ENCODE measurements at regions of chr1 and their contacts with region 1.

Region 1: GRCh38 chr1:93061895-93062792 is 16.9 kb upstream of the MTF2 start:
- DNase-seq: peak; percentile 25 to 65
- H3K4me3 ChIP-seq: no peak overlapping the region; the same call in 1 of the 2 replicates
- H3K27ac ChIP-seq: no peak overlapping the region
- H3K4me1 ChIP-seq: peaks cover 10% of the 10 kb centered on the region
- H3K27me3 ChIP-seq: no peaks in the 10 kb centered on the region
- CTCF ChIP-seq: peak; percentile 93

Region 2: GRCh38 chr1:92858564-92859399 is 203.4 kb before region 1 on chr1:
- CTCF ChIA-PET with region 1: interaction called, 9 read pairs
- POLR2A ChIA-PET with region 1: no interaction called
- intact Hi-C with region 1: loop called (anchors 1 kb)
- DNase-seq: peak; percentile 45 to 82
- H3K4me3 ChIP-seq: no peak overlapping the region
- H3K27ac ChIP-seq: no peak overlapping the region
- H3K4me1 ChIP-seq: no peaks in the 10 kb centered on the region
- H3K27me3 ChIP-seq: no peaks in the 10 kb centered on the region
- CTCF ChIP-seq: peak; percentile 100

Region 3: GRCh38 chr1:92960395-92961130 is 101.6 kb before region 1 on chr1:
- CTCF ChIA-PET with region 1: interaction called, 7 read pairs
- POLR2A ChIA-PET with region 1: no interaction called
- intact Hi-C with region 1: loop called (anchors 2 kb)
- DNase-seq: peak; percentile 61 to 83
- H3K4me3 ChIP-seq: peak overlapping the region; percentile 66
- H3K27ac ChIP-seq: peak overlapping the region; percentile 65
- H3K4me1 ChIP-seq: peaks cover 22% of the 10 kb centered on the region
- H3K27me3 ChIP-seq: no peaks in the 10 kb centered on the region
- CTCF ChIP-seq: peak; percentile 81

Region 4: DNA sequence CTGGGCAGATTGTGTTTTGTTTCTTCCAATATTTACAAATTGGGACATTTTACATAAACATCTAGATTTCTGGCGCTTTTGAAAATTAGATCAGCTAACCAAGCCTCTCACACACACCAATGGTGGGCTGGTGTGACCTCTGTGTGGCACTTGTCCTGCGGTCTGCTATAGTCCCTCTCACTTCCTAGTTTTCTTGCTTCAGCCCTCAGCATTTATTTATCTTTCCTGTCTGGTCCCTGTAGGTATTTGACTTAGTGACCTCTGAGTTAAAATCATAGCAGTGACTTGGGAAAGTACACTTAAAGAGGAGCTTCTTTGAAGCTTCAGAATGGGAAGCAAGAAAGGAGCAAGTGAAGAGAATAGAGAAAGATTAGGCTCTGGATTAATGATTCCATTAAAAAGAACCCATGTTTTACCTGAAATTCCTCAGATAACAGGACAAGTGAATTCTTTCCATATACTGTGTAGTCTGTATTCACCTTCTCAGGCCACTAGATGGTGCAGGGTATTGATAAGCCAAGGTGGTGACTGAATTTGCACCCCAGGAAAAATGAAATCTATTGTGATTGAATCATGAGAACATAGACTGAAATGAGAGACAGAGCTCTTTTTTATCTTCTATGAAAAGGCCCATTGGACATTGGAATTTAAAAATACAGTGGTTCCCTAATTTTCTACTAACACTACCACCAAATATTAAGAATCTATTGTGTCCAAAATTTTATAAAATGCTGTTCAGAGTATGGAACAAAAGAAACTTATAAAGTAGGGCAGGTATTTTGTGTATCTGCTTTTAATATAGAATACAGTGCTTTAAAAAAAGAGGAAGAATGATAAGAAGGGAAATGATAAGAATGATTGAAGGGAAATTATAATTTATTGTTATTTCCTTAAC is 93.8 kb before region 1 on chr1:
- CTCF ChIA-PET with region 1: interaction called, 3 read pairs
- POLR2A ChIA-PET with region 1: no interaction called
- intact Hi-C with region 1: loop called (anchors 1 kb)
- DNase-seq: peak in 1 of 2 experiments; percentile 44
- H3K4me3 ChIP-seq: no peak overlapping the region
- H3K27ac ChIP-seq: peak overlapping the region; percentile 2; the same call in 1 of the 2 replicates
- H3K4me1 ChIP-seq: peaks cover 21% of the 10 kb centered on the region
- H3K27me3 ChIP-seq: no peaks in the 10 kb centered on the region
- CTCF ChIP-seq: peak; percentile 86

Region 5: DNA sequence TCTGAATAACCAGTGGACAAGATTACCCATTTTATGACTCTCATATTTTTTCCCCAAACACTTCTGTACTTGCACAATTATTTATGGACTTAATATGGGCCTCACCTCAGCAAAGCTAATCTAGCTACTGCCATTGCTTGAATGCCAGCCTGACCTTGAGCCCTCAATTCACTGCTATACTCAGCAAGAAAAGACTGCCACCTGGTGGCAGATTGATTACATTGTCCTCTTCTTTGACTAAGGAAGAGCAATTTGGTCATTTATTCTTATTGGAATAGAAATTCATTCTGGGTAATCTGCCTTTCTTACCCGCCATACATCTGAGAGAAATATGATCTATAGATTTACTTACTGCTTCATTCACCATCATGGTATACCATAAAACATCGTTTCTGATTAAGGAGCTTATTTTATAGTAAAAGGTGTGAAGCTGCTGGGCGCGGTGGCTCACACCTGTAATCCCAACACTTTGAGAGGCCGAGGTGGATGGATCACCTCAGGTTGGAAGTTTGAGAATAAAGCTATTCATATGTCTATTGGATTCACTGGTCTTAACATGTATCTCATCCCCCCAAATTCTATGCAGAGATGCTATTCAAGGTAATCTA is 67.9 kb before region 1 on chr1:
- CTCF ChIA-PET with region 1: interaction called, 3 read pairs
- POLR2A ChIA-PET with region 1: interaction called, 4 read pairs
- intact Hi-C with region 1: loop called (anchors 1 kb)
- DNase-seq: peak; percentile 33 to 79
- H3K4me3 ChIP-seq: no peak overlapping the region
- H3K27ac ChIP-seq: no peak overlapping the region
- H3K4me1 ChIP-seq: peaks cover 66% of the 10 kb centered on the region
- H3K27me3 ChIP-seq: no peaks in the 10 kb centered on the region
- CTCF ChIP-seq: peak; percentile 98

Region 6: GRCh38 chr1:93021539-93022134 is 40.5 kb before region 1 on chr1:
- CTCF ChIA-PET with region 1: interaction called, 13 read pairs
- POLR2A ChIA-PET with region 1: no interaction called
- intact Hi-C with region 1: loop called (anchors 1 kb)
- DNase-seq: peak in 1 of 2 experiments; percentile 56
- H3K4me3 ChIP-seq: no peak overlapping the region
- H3K27ac ChIP-seq: no peak overlapping the region
- H3K4me1 ChIP-seq: peaks cover 13% of the 10 kb centered on the region
- H3K27me3 ChIP-seq: no peaks in the 10 kb centered on the region
- CTCF ChIP-seq: peak; percentile 97

Region 7: GRCh38 chr1:93042187-93043056 is 19.7 kb before region 1 on chr1:
- CTCF ChIA-PET with region 1: no interaction called
- POLR2A ChIA-PET with region 1: no interaction called
- intact Hi-C with region 1: no loop called
- DNase-seq: no peak
- H3K4me3 ChIP-seq: no peak overlapping the region
- H3K27ac ChIP-seq: no peak overlapping the region
- H3K4me1 ChIP-seq: no peaks in the 10 kb centered on the region
- H3K27me3 ChIP-seq: no peaks in the 10 kb centered on the region
- CTCF ChIP-seq: no peak

Region 8: GRCh38 chr1:93453911-93454310 is 391.8 kb after region 1 on chr1:
- CTCF ChIA-PET with region 1: interaction called, 15 read pairs
- POLR2A ChIA-PET with region 1: no interaction called
- intact Hi-C with region 1: no loop called
- DNase-seq: no peak
- H3K4me3 ChIP-seq: no peak overlapping the region
- H3K27ac ChIP-seq: peak overlapping the region; percentile 16; the same call in 1 of the 2 replicates
- H3K4me1 ChIP-seq: peaks cover 38% of the 10 kb centered on the region
- H3K27me3 ChIP-seq: no peaks in the 10 kb centered on the region
- CTCF ChIP-seq: no peak